ENCODE measurements at regions of chr5 and their contacts with region 1.

Region 1: GRCh38 chr5:95471942-95472341 is 80.8 kb downstream of the FAM81B start:
- DNase-seq: no peak
- ATAC-seq: 0 out of 2 replicates have a peak, but pooled peaks have one; percentile 48
- H3K4me3 ChIP-seq: no peak overlapping the region
- H3K27ac ChIP-seq: no peak overlapping the region
- H3K4me1 ChIP-seq: no peaks in the 10 kb centered on the region
- H3K27me3 ChIP-seq: no peaks in the 10 kb centered on the region
- CTCF ChIP-seq: no peak

Region 2: GRCh38 chr5:95130941-95131340 is 341.0 kb before region 1 on chr5:
- CTCF ChIA-PET with region 1: no interaction called
- POLR2A ChIA-PET with region 1: no interaction called
- in situ Hi-C with region 1: no loop called
- intact Hi-C with region 1: no loop called
- DNase-seq: no peak
- ATAC-seq: no peak
- H3K4me3 ChIP-seq: no peak overlapping the region
- H3K27ac ChIP-seq: no peak overlapping the region
- H3K4me1 ChIP-seq: no peaks in the 10 kb centered on the region
- H3K27me3 ChIP-seq: no peaks in the 10 kb centered on the region
- CTCF ChIP-seq: no peak

Region 3: DNA sequence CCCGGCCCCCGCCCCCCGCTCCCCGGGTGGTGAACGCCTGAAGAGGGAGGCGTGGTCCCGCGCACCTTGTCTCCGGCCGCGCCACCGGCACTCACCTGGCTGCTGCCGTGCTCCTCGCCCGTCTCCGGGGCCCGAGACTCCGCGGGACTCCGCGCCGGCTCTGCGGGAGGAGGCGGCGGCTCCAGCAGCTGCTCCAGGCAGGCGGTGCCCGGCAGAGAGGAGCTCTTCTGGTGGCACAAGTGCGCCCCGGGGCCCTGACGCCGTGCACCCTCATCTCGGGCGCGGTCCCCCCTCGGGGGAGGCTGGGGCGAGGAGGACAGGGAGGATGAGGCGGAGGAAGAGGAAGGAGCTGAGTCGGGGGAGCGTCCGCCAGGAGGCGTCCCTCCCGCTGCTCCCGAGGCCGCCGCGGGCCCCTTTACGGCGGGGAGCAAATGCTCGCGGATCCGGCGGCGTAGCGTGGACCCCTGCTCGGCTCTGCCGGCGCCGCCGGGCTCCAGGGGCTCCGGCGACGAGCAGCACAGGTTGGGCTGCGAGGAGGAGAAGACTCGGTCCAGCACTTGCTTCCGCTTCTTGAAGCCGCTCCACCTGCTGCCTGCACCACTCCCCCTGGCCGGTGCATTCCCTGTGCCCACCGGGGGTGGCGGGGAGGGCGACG is 188.1 kb before region 1 on chr5:
- CTCF ChIA-PET with region 1: no interaction called
- POLR2A ChIA-PET with region 1: no interaction called
- in situ Hi-C with region 1: no loop called
- intact Hi-C with region 1: loop called (anchors 10 kb)
- DNase-seq: no peak
- ATAC-seq: peak; percentile 75
- H3K4me3 ChIP-seq: peak overlapping the region; percentile 46 to 56
- H3K27ac ChIP-seq: no peak overlapping the region
- H3K4me1 ChIP-seq: peaks cover 4% of the 10 kb centered on the region; the same call in 1 of the 2 replicates
- H3K27me3 ChIP-seq: peaks cover 63% of the 10 kb centered on the region
- CTCF ChIP-seq: peak; percentile 87